ENCODE measurements at regions of chr11 and their contacts with region 1.

Region 1: GRCh38 chr11:128831174-128832120 is 35.6 kb downstream of the KCNJ1 start:
- DNase-seq: no peak
- H3K4me3 ChIP-seq: peak overlapping the region in 1 of 4 donors; percentile 34
- H3K27ac ChIP-seq: no peak overlapping the region
- H3K4me1 ChIP-seq: peaks cover 8 to 15% (median 12%) of the 10 kb centered on the region in 4 donors
- H3K27me3 ChIP-seq: peaks cover 0 to 28% (median 0%) of the 10 kb centered on the region in 4 donors
- CTCF ChIP-seq: peak; percentile 78 to 92 (median 91)
- EP300 ChIP-seq: no peak
- POLR2A ChIP-seq: no peak

Region 2: GRCh38 chr11:128039140-128040021 is 792.1 kb before region 1 on chr11:
- intact Hi-C with region 1: loop called (anchors 5 kb)
- DNase-seq: no peak
- H3K4me3 ChIP-seq: no peak overlapping the region
- H3K27ac ChIP-seq: no peak overlapping the region
- H3K4me1 ChIP-seq: no peaks in the 10 kb centered on the region
- H3K27me3 ChIP-seq: peaks cover 0 to 28% (median 0%) of the 10 kb centered on the region in 4 donors
- CTCF ChIP-seq: no peak
- EP300 ChIP-seq: no peak
- POLR2A ChIP-seq: no peak

Region 3: GRCh38 chr11:128157423-128158298 is 673.8 kb before region 1 on chr11:
- intact Hi-C with region 1: loop called (anchors 5 kb)
- DNase-seq: no peak
- H3K4me3 ChIP-seq: peak overlapping the region in 2 of 4 donors; percentile 16 to 38
- H3K27ac ChIP-seq: no peak overlapping the region
- H3K4me1 ChIP-seq: no peaks in the 10 kb centered on the region
- H3K27me3 ChIP-seq: no peaks in the 10 kb centered on the region
- CTCF ChIP-seq: peak; percentile 65 to 82 (median 71)
- EP300 ChIP-seq: no peak
- POLR2A ChIP-seq: no peak

Region 4: GRCh38 chr11:128172046-128172878 is 659.2 kb before region 1 on chr11:
- intact Hi-C with region 1: loop called (anchors 5 kb)
- DNase-seq: peak; percentile 94
- H3K4me3 ChIP-seq: no peak overlapping the region
- H3K27ac ChIP-seq: no peak overlapping the region
- H3K4me1 ChIP-seq: peaks cover 0 to 6% (median 2%) of the 10 kb centered on the region in 4 donors
- H3K27me3 ChIP-seq: no peaks in the 10 kb centered on the region
- CTCF ChIP-seq: peak; percentile 77 to 78 (median 77)
- EP300 ChIP-seq: no peak
- POLR2A ChIP-seq: no peak

Region 5: DNA sequence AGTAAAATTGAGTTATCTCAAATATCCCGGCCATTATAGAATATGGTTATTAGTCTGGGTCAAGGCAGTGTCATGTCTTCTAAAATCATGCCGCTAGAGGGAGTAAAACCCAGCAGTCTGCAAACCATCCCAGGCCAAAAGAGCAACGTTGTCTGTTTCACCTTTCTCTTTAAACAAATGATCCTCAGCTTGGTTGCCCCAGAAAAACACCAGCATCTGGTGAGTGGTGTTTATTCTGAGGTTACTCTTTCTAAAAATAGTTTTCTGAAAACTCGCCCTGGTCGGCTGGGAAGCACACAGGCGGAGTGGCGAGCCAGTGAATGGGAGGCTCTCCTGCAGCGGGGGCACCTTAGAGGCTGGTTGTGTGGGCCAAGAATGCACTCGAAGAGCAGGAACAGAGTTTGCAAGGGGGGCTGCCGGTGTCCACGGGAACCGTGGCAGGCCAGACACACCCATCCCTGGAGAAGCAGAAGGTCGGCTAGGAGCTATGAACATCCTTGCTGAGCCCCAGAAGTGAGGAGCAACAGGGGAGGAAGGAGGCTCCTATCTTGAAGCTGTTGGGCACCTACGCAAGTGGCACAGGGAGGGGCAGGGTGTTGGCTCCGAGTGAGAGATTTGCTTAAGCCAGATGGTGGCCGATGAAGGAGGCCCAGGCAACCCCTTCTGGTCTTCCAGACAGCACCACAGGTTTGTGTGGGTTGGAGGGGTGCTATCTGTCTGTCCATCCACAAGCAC is 541.2 kb before region 1 on chr11:
- intact Hi-C with region 1: loop called (anchors 5 kb)
- DNase-seq: no peak
- H3K4me3 ChIP-seq: peak overlapping the region in 3 of 4 donors; percentile 26 to 44 (median 26)
- H3K27ac ChIP-seq: peak overlapping the region; percentile 43 to 58 (median 54)
- H3K4me1 ChIP-seq: peaks cover 23 to 32% (median 31%) of the 10 kb centered on the region in 4 donors
- H3K27me3 ChIP-seq: no peaks in the 10 kb centered on the region
- CTCF ChIP-seq: peak; percentile 84 to 87 (median 85)
- EP300 ChIP-seq: no peak
- POLR2A ChIP-seq: no peak

Region 6: DNA sequence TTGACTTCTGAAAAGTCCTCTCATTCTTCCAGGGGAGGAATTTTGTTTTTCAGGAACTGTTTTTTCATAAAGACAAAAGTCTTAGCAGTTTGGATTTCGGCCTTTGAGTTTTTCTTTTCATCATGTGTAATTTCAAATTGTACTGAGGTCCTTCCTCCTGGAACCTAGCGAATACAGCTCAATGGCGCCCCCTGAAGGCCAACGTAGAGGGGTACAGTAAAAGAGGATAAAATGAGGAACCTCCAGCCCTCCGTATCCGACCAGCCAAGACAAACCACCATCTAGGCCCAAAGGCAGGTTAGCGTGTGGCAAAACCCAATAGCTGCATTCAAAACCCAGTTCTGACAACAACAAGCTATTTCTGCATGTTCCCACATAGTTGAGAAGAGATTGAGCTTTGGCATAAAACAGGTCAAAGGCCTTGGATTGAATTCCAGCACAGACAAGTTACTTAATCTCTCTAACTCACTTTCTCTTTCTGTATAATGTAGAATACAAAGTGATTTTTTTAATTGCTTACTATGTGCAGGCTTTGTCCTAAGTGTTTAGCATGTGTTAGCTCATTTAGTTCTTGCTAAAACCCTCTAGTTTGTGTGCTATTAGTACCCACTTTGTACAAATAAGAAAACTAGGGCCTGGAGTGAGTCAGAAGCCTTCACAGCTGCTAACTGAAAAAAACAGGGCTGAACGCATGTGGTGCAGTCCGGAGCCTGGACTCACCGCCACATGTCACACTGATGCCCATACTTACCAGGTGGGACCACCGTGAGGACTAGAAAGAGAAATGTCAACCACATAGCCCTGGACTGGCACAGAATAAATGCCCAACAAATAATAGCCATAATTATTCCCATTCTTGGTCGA is 200.8 kb before region 1 on chr11:
- intact Hi-C with region 1: loop called (anchors 5 kb)
- DNase-seq: peak; percentile 96
- H3K4me3 ChIP-seq: peak overlapping the region in 1 of 4 donors; percentile 5
- H3K27ac ChIP-seq: peak overlapping the region in 1 of 4 donors; percentile 32
- H3K4me1 ChIP-seq: peaks cover 14 to 17% (median 14%) of the 10 kb centered on the region in 4 donors
- H3K27me3 ChIP-seq: no peaks in the 10 kb centered on the region
- CTCF ChIP-seq: peak; percentile 83 to 91 (median 89)
- EP300 ChIP-seq: no peak
- POLR2A ChIP-seq: no peak

Region 7: DNA sequence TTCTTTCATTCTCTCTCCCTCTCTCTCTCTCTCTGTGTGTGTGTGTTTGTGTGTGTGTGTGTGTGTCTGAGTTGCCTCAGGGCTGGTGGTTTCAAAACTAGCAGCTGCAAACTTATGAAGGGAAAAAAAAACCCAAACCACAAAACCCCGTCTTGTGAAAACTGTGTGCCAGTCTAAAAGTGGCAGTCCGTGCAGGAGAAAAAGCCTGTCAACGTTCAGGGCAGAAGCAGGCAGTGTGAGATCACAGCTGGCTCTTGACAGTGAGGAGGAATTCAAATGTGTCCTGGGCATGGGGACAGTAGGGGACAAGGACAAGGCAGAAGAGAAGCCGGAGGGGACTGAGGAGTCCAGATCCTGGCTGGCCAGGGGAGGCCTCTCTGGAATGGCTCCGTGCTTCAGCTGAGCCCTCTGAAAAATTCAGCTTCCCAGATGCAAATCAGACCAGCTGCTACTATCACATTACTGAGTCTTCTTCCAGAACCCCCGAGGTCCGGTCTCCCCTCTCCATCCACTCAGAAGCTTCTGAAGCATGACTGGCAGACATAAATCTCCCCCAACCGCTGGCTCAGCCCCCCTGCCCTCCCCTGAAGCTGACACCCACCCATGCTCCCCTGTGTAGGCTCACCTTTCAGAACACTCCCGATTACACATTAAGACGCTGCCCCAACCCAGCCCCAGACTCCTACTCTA is 105.7 kb before region 1 on chr11:
- intact Hi-C with region 1: no loop called
- DNase-seq: no peak
- H3K4me3 ChIP-seq: no peak overlapping the region
- H3K27ac ChIP-seq: peak overlapping the region; percentile 21 to 50 (median 26)
- H3K4me1 ChIP-seq: peaks cover 9 to 77% (median 57%) of the 10 kb centered on the region in 4 donors
- H3K27me3 ChIP-seq: no peaks in the 10 kb centered on the region
- CTCF ChIP-seq: no peak
- EP300 ChIP-seq: no peak
- POLR2A ChIP-seq: no peak

Measured in esophagus muscularis mucosa (tissue), 4 donors.